ENCODE measurements at regions of chr1 and their contacts with region 1.

Region 1: GRCh38 chr1:170010443-170010842 is 64.1 kb downstream of the KIFAP3 start:
- DNase-seq: peak; percentile 74
- H3K4me3 Mint-ChIP-seq: no peak overlapping the region
- H3K27ac Mint-ChIP-seq: no peak overlapping the region
- H3K4me1 Mint-ChIP-seq: no peaks in the 10 kb centered on the region
- H3K27me3 Mint-ChIP-seq: no peaks in the 10 kb centered on the region
- CTCF ChIP-seq: peak; percentile 54

Region 2: GRCh38 chr1:169694304-169695075 is 316.0 kb before region 1 on chr1:
- CTCF ChIA-PET with region 1: no interaction called
- POLR2A ChIA-PET with region 1: no interaction called
- intact Hi-C with region 1: no loop called
- DNase-seq: no peak
- H3K4me3 Mint-ChIP-seq: no peak overlapping the region
- H3K27ac Mint-ChIP-seq: no peak overlapping the region
- H3K4me1 Mint-ChIP-seq: no peaks in the 10 kb centered on the region
- H3K27me3 Mint-ChIP-seq: peaks cover 18% of the 10 kb centered on the region
- CTCF ChIP-seq: no peak

Region 3: GRCh38 chr1:169722776-169723175 is 287.7 kb before region 1 on chr1:
- CTCF ChIA-PET with region 1: no interaction called
- POLR2A ChIA-PET with region 1: no interaction called
- intact Hi-C with region 1: no loop called
- DNase-seq: no peak
- H3K4me3 Mint-ChIP-seq: no peak overlapping the region
- H3K27ac Mint-ChIP-seq: no peak overlapping the region
- H3K4me1 Mint-ChIP-seq: no peaks in the 10 kb centered on the region
- H3K27me3 Mint-ChIP-seq: peaks cover 14% of the 10 kb centered on the region
- CTCF ChIP-seq: no peak

Region 4: DNA sequence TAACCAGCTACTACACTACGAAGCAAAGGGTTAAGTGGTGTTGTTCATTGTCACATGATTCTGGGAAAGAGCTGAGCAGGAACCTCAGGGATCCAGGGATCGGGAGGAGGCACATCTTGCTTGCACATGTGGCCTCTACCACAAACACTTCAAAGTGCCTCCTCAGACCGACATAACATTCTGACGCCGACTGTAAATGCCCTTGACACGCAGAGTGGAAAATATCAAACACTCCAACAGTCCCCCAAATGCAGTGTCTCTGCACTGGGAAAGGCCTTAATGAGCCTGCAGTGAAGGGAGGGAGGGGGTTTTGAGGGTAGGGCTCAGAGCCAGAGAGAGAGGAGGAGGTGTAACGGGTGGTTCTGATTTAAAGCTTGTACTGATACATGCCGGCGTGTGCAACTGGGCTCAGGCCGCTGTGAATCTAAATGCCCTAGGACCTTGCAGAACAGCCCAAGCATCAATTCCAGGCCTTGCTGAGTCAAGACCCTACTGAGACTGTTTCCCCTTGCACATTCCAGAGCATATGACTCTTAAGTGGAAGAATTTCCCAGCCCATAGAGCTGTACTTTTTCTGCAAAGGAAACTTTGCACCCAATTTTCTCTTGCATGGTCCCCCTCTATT is 299.1 kb after region 1 on chr1:
- CTCF ChIA-PET with region 1: no interaction called
- POLR2A ChIA-PET with region 1: no interaction called
- intact Hi-C with region 1: no loop called
- DNase-seq: no peak
- H3K4me3 Mint-ChIP-seq: no peak overlapping the region
- H3K27ac Mint-ChIP-seq: no peak overlapping the region
- H3K4me1 Mint-ChIP-seq: no peaks in the 10 kb centered on the region
- H3K27me3 Mint-ChIP-seq: no peaks in the 10 kb centered on the region
- CTCF ChIP-seq: no peak

Region 5: DNA sequence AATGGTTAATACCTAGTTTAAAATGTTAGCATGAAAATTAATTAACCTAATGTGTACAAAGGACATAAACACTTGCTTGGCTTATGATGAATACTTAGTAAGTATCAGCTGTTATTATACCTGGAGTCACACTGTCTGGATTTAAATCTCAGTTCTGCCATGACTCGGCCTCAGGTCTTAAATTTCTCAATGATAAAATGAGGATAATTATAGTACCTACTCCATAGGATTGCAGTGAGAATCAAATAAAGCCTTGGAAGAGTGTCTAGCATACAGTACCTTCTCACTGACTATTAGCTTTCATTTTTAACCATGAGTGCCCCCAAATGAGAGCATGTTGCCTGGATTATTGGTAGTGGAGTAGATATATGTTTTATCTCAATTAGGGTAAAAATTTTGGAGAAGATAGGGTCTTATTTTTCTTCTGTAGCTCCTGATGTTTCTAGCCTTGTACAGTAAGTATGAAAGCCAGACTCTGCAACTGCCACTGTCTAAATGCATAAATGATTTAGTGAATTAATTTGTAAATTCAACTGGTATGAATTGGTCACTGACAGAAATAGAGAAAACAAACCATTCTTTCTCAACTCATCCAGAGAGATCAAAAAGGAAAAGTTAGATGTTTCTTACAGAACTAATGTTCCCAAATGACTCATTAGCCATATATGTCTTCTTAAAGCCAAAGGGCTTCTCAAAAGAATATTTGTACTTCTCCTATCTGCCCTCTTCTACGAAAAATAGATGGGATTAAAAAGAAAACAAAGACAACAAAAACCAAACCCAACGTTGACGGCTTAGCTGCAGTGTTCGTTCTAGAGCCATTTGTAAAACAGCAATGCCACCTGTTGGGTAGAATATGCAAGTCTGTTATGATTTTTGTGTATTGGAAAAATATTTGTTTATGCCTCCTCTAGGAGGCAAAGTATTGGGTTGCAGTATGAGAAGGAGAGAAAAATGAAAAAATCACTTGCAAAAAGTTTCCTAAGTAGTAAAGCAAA is 871.1 kb after region 1 on chr1:
- CTCF ChIA-PET with region 1: interaction called, 3 read pairs
- POLR2A ChIA-PET with region 1: no interaction called
- intact Hi-C with region 1: loop called (anchors 5 kb)
- DNase-seq: peak; percentile 69
- H3K4me3 Mint-ChIP-seq: no peak overlapping the region
- H3K27ac Mint-ChIP-seq: no peak overlapping the region
- H3K4me1 Mint-ChIP-seq: peaks cover 7% of the 10 kb centered on the region
- H3K27me3 Mint-ChIP-seq: peaks cover 12% of the 10 kb centered on the region
- CTCF ChIP-seq: peak; percentile 63

Region 6: GRCh38 chr1:170939476-170939875 is 929.0 kb after region 1 on chr1:
- CTCF ChIA-PET with region 1: no interaction called
- POLR2A ChIA-PET with region 1: no interaction called
- intact Hi-C with region 1: no loop called
- DNase-seq: no peak
- H3K4me3 Mint-ChIP-seq: no peak overlapping the region
- H3K27ac Mint-ChIP-seq: no peak overlapping the region
- H3K4me1 Mint-ChIP-seq: no peaks in the 10 kb centered on the region
- H3K27me3 Mint-ChIP-seq: peaks cover 9% of the 10 kb centered on the region
- CTCF ChIP-seq: no peak

Measured in MCF 10A (cell line).